Natural killer cell (primary cell): ENCODE measurements at regions of chr9 and their contacts with region 1.

Region 1: DNA sequence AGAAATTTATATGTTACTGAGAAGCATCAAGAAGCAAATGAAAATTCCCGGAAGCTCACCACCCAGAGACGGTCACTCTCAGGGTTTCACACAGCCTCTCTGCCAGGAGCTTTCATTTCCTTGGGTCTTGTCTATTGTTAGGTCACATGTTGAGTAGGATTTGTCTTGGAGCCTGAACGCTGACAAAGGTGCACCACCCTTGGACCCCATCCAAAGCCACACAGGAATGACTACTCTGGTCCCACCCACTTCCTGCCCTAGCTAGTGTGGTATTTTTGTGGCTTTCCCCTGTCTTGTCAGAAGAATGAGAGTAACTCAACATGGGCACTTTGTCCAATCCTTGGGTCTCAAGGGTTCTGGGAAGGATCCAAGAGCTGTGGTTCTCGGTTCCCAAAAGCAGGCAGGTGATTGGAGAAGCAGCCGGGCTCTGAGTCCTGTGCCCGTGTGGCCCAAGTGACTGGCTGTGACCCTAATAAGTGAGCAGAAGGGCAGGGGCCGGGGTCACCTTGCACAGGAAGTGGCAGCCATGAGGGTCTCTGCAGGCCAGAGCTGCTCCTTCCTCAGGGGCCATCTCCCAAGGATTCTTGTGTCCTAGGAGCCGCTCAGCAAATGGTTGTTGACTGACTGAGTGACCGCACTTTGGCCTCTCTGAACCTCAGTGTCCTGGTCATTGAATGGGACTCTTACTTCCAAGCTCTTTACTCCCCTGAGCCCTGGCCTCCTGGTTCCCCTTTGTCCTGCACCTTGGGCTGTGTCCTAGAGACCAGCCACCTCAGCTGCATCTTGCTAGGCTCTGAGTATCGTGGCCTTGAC is 6.9 kb downstream of the FGD3 start:
- DNase-seq: peak in 1 of 2 donors; percentile 95
- ATAC-seq: peak; percentile 71 to 82 (median 77)
- H3K4me3 ChIP-seq: peak overlapping the region; percentile 1
- H3K4me3 Mint-ChIP-seq: peak overlapping the region; percentile 76
- H3K27ac ChIP-seq: peak overlapping the region; percentile 55
- H3K27ac Mint-ChIP-seq: peak overlapping the region; percentile 77 to 84
- H3K4me1 ChIP-seq: peaks cover 40% of the 10 kb centered on the region
- H3K4me1 Mint-ChIP-seq: peaks cover 21% of the 10 kb centered on the region in 2 donors
- H3K27me3 ChIP-seq: no peaks in the 10 kb centered on the region
- H3K27me3 Mint-ChIP-seq: no peaks in the 10 kb centered on the region
- CTCF ChIP-seq: no peak

Region 2: GRCh38 chr9:92986176-92987085 is 32.2 kb after region 1 on chr9:
- intact Hi-C with region 1: loop called (anchors 1 kb)
- DNase-seq: peak in 1 of 2 donors; percentile 81
- ATAC-seq: peak; percentile 67 to 82 (median 71)
- H3K4me3 ChIP-seq: no peak overlapping the region
- H3K4me3 Mint-ChIP-seq: peak overlapping the region; percentile 5
- H3K27ac ChIP-seq: peak overlapping the region; percentile 42
- H3K27ac Mint-ChIP-seq: peak overlapping the region; percentile 67 to 78
- H3K4me1 ChIP-seq: peaks cover 45% of the 10 kb centered on the region
- H3K4me1 Mint-ChIP-seq: peaks cover 83 to 92% of the 10 kb centered on the region in 2 donors
- H3K27me3 ChIP-seq: no peaks in the 10 kb centered on the region
- H3K27me3 Mint-ChIP-seq: no peaks in the 10 kb centered on the region
- CTCF ChIP-seq: peak; percentile 81

Region 3: DNA sequence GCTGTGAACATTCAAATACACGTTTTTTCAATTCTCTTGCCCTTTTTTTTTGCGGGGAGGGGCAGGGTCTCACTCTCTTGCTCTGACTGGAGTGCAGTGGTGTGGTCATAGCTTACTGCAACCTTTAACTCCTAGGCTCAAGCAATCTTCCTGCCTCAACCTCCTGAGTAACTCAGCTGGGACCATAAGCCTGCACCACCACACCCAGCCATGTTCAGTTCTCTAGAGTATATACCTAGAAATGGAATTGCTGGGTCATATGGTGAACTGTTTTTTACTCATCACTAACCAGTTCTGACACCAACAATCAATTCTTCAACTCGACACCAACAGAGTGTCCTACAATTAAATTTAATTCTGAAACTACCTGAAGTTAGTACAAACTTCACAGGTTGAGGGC is 1219.4 kb after region 1 on chr9:
- intact Hi-C with region 1: loop called (anchors 5 kb)
- DNase-seq: no peak
- ATAC-seq: no peak
- H3K4me3 ChIP-seq: no peak overlapping the region
- H3K4me3 Mint-ChIP-seq: no peak overlapping the region
- H3K27ac ChIP-seq: no peak overlapping the region
- H3K27ac Mint-ChIP-seq: peak overlapping the region; percentile 72 to 75
- H3K4me1 ChIP-seq: peaks cover 16% of the 10 kb centered on the region
- H3K4me1 Mint-ChIP-seq: peaks cover 61 to 67% of the 10 kb centered on the region in 2 donors
- H3K27me3 ChIP-seq: no peaks in the 10 kb centered on the region
- H3K27me3 Mint-ChIP-seq: no peaks in the 10 kb centered on the region
- CTCF ChIP-seq: no peak